ENCODE measurements at regions of chr13 and their contacts with region 1.

Region 1: GRCh38 chr13:77810430-77810829 is 108.2 kb downstream of the EDNRB start:
- DNase-seq: peak; percentile 59
- H3K4me3 Mint-ChIP-seq: no peak overlapping the region
- H3K27ac Mint-ChIP-seq: no peak overlapping the region
- H3K4me1 Mint-ChIP-seq: peaks cover 6% of the 10 kb centered on the region
- H3K27me3 Mint-ChIP-seq: peaks cover 43% of the 10 kb centered on the region
- CTCF ChIP-seq: peak; percentile 35

Region 2: GRCh38 chr13:77779552-77780272 is 30.7 kb before region 1 on chr13:
- CTCF ChIA-PET with region 1: interaction called, 5 read pairs
- POLR2A ChIA-PET with region 1: interaction called, 3 read pairs
- intact Hi-C with region 1: loop called (anchors 2 kb)
- DNase-seq: peak; percentile 63
- H3K4me3 Mint-ChIP-seq: no peak overlapping the region
- H3K27ac Mint-ChIP-seq: no peak overlapping the region
- H3K4me1 Mint-ChIP-seq: no peaks in the 10 kb centered on the region
- H3K27me3 Mint-ChIP-seq: peaks cover 48% of the 10 kb centered on the region
- CTCF ChIP-seq: peak; percentile 73

Measured in MCF 10A (cell line).